ENCODE measurements at regions of chr9 and their contacts with region 1.

Region 1: DNA sequence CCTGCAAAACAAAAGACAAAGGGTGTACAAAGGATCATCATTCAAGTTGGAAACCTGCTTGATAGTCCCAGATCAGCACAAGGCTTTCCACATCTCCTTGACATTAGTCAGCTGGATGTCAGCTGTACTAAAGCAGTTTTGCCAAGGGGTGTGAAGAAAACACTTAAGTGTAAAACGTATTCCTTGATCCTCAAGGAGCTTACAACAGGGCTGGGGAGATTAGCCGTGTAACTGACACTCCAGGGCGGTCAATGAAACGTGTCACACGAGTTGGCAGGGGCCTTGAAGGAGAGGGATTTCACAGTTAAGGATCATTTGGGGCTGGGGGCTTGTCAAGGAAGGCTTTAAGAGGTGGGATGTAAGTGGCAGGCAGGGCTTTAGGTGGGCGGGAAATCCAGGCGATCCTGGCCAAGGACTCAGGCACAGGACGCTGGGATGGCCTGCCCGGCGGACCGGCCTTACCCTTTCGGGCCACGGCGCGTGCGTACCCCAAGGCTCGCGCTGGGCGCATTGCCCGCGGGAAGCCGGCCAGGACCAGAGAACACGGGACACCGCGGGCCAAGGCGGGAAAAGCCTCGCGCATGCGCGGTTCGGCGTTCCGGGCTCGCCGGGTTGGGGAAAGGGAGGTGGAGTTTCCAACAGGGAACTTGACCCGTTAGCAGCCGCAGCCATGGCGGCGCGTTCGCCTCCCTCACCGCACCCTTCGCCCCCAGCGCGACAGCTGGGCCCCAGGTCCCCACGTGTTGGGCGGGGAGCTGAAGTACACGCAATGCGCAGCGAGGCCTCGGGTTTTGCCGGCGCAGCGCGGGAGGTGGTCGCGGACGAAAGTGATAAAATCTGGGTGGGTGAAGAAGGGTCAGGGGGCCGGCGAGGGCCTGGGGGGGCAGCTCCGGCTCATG is at the start of gene CNTLN:
- ATAC-seq: peak; percentile 88 to 97 (median 93)
- H3K4me3 ChIP-seq: peak within 1 kb of the TSS; percentile 57 to 93 (median 79)
- H3K27ac ChIP-seq: peak within 1 kb of the TSS; percentile 30 to 86
- H3K4me1 ChIP-seq: peaks cover 3 to 4% of the 10 kb centered on the region in 2 donors
- total RNA-seq, gene CNTLN: 6.3 to 19.0 (median 9.3) TPM

Region 2: GRCh38 chr9:17229945-17230560 is 95.4 kb after region 1 on chr9:
- in situ Hi-C with region 1: loop called in 1 of 9 experiments (anchors 25 kb)
- ATAC-seq: peak in 1 of 8 experiments; percentile 22
- H3K4me3 ChIP-seq: no peak overlapping the region
- H3K27ac ChIP-seq: no peak overlapping the region
- H3K4me1 ChIP-seq: peaks cover 0 to 3% of the 10 kb centered on the region in 2 donors